Natural killer cell (primary cell): ENCODE measurements at regions of chr12 and their contacts with region 1.

Region 1: DNA sequence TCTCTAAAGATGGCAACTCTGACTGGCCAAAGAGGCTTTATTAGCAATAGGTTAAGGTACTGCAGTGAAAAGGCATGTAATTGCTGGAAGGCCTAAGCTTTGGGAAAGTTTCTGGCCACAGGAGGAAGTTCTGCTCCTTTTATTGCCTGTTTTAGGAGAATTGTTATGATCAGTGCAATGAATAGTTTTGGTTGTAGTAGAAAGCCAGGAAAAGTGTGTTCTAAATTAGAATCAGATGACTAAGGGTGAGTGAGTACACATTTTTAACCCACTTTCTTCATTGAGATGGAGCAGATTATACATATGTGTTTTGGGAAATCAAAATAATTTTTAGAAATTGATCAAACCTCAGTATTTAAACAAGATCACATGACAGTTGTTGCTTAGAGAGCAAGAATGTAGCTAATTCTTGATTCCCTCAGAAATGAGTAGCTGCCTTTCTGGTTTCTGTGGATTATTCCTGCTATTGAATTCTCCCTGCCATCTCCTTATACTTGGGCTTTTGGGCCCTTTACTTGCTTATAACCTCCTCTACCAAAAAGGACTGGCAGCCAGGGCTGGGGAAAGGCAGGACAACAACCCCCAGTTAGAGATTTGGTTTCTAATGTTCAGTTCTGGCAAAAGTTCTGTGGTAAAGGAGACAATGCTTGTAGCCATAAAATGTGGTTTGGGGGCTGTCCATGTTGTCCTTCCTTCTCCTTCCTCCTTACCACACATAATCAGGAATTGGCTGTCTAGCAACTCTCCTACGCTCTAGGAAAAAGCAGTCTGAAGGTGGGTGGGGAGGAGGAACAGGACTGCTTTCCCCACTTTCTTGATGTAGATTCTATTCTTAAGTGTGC is 217.1 kb downstream of the SLC38A4 start:
- DNase-seq: no peak
- ATAC-seq: peak in 1 of 3 donors; percentile 5
- H3K4me3 ChIP-seq: no peak overlapping the region
- H3K4me3 Mint-ChIP-seq: peak overlapping the region; percentile 92
- H3K27ac ChIP-seq: peak overlapping the region; percentile 7
- H3K27ac Mint-ChIP-seq: peak overlapping the region; percentile 51 to 92
- H3K4me1 ChIP-seq: peaks cover 31% of the 10 kb centered on the region
- H3K4me1 Mint-ChIP-seq: peaks cover 63 to 65% of the 10 kb centered on the region in 2 donors
- H3K27me3 ChIP-seq: no peaks in the 10 kb centered on the region
- H3K27me3 Mint-ChIP-seq: no peaks in the 10 kb centered on the region
- CTCF ChIP-seq: no peak

Region 2: DNA sequence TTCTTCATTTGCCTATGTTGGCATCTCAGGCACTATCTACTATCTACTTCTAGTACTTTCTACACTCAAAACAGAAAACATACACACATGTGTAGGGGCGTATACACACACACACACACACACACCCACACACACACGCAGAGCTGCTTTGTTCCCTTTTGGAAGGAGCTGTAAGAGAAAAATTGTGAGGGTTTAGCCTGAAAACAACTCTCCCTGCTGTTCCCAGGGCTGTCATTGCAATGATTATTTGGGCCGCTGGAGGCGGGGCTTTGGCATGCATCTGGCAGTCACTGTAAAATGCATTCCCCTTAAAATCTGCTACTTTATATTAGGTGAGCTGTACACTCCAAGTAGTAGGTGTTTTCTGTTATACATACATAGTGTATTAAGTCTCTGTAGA is 207.0 kb before region 1 on chr12:
- intact Hi-C with region 1: loop called (anchors 10 kb)
- DNase-seq: no peak
- ATAC-seq: no peak
- H3K4me3 ChIP-seq: no peak overlapping the region
- H3K4me3 Mint-ChIP-seq: no peak overlapping the region
- H3K27ac ChIP-seq: no peak overlapping the region
- H3K27ac Mint-ChIP-seq: no peak overlapping the region
- H3K4me1 ChIP-seq: peaks cover 12% of the 10 kb centered on the region
- H3K4me1 Mint-ChIP-seq: peaks cover 53 to 54% of the 10 kb centered on the region in 2 donors
- H3K27me3 ChIP-seq: no peaks in the 10 kb centered on the region
- H3K27me3 Mint-ChIP-seq: no peaks in the 10 kb centered on the region
- CTCF ChIP-seq: no peak

Region 3: GRCh38 chr12:46459861-46460545 is 148.6 kb before region 1 on chr12:
- intact Hi-C with region 1: loop called (anchors 5 kb)
- DNase-seq: peak in 1 of 2 donors; percentile 37
- ATAC-seq: no peak
- H3K4me3 ChIP-seq: no peak overlapping the region
- H3K4me3 Mint-ChIP-seq: peak overlapping the region; percentile 76
- H3K27ac ChIP-seq: peak overlapping the region; percentile 10
- H3K27ac Mint-ChIP-seq: peak overlapping the region; percentile 87 to 89
- H3K4me1 ChIP-seq: peaks cover 35% of the 10 kb centered on the region
- H3K4me1 Mint-ChIP-seq: peaks cover 62 to 63% of the 10 kb centered on the region in 2 donors
- H3K27me3 ChIP-seq: no peaks in the 10 kb centered on the region
- H3K27me3 Mint-ChIP-seq: no peaks in the 10 kb centered on the region
- CTCF ChIP-seq: no peak

Region 4: DNA sequence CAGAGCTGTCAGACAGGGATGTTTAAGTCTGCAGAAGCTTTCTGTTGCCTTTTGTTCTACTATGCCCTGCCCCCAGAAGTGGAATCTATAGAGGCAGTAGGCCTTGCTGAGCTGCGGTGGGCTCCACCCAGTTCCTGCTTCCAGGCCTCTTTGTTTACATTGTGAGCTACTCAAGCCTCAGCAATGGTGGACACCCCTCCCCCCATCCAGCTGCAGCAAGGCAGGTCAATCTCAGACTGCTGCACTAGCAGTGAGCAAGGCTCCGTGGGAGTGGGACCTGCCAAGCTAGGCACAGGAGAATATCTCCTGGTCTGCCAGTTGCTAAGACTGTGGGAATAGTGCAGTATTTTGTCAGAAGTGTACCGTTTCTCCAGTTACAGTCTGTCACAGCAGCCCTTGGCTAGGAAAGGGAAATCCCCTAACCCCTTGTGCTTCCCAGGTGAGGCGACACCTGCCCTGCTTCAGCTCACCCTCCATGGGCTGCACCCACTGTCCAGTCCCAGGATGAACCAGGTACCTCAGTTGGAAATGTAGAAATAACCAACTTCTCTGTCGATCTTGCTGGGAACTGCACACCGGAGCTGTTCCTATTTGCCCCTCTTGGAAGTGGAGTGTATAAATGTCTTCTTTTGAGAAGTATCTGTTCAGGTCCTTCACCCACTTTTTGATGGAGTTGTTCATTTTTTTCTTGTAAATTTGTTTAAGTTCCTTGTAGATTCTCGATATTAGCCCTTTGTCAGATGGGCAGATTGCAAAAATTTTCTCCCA is 22.6 kb before region 1 on chr12:
- intact Hi-C with region 1: no loop called
- DNase-seq: peak; percentile 30 to 57
- ATAC-seq: peak in 2 of 3 donors; percentile 50 to 54
- H3K4me3 ChIP-seq: no peak overlapping the region
- H3K4me3 Mint-ChIP-seq: peak overlapping the region; percentile 38
- H3K27ac ChIP-seq: peak overlapping the region; percentile 39
- H3K27ac Mint-ChIP-seq: peak overlapping the region; percentile 54 to 60
- H3K4me1 ChIP-seq: peaks cover 12% of the 10 kb centered on the region
- H3K4me1 Mint-ChIP-seq: peaks cover 84 to 86% of the 10 kb centered on the region in 2 donors
- H3K27me3 ChIP-seq: no peaks in the 10 kb centered on the region
- H3K27me3 Mint-ChIP-seq: no peaks in the 10 kb centered on the region
- CTCF ChIP-seq: no peak

Region 5: GRCh38 chr12:46661110-46661845 is 52.6 kb after region 1 on chr12:
- intact Hi-C with region 1: loop called (anchors 5 kb)
- DNase-seq: peak in 1 of 2 donors; percentile 70
- ATAC-seq: peak; percentile 64 to 73 (median 73)
- H3K4me3 ChIP-seq: no peak overlapping the region
- H3K4me3 Mint-ChIP-seq: peak overlapping the region; percentile 56
- H3K27ac ChIP-seq: peak overlapping the region; percentile 35
- H3K27ac Mint-ChIP-seq: peak overlapping the region; percentile 55 to 83
- H3K4me1 ChIP-seq: peaks cover 3% of the 10 kb centered on the region
- H3K4me1 Mint-ChIP-seq: peaks cover 46% of the 10 kb centered on the region in 2 donors
- H3K27me3 ChIP-seq: no peaks in the 10 kb centered on the region
- H3K27me3 Mint-ChIP-seq: no peaks in the 10 kb centered on the region
- CTCF ChIP-seq: peak; percentile 62